Activated T-helper 1 cell treated with anti-CD3 and anti-CD28 coated beads, Interleukin-12 subunit alpha, Interleukin-12 subunit beta, Interleukin-2, Interleukin-4 antibody, amounts not matched to agents 30 ng/mL and 10 ng/mL and 1 ng/mL, durations not matched to agents 14 hours and 24 hours and 36 hours (primary cell): ENCODE measurements at regions of chr16 and their contacts with region 1.

Region 1: GRCh38 chr16:1378804-1379303 is 27.1 kb downstream of the GNPTG start:
- DNase-seq: peak; percentile 71
- H3K4me3 Mint-ChIP-seq: peak overlapping the region; percentile 83
- H3K27ac Mint-ChIP-seq: peak overlapping the region; percentile 94
- H3K4me1 Mint-ChIP-seq: peaks cover 15% of the 10 kb centered on the region
- H3K27me3 Mint-ChIP-seq: no peaks in the 10 kb centered on the region

Region 2: GRCh38 chr16:1308977-1309885 is 69.6 kb before region 1 on chr16 and contains the start of gene UBE2I:
- intact Hi-C with region 1: loop called (anchors 2 kb)
- DNase-seq: peak; percentile 98
- H3K4me3 Mint-ChIP-seq: peak within 1 kb of the TSS; percentile 95
- H3K27ac Mint-ChIP-seq: peak within 1 kb of the TSS; percentile 100
- H3K4me1 Mint-ChIP-seq: peaks cover 20% of the 10 kb centered on the region
- H3K27me3 Mint-ChIP-seq: peaks cover 2% of the 10 kb centered on the region
- total RNA-seq, gene UBE2I: 257 TPM in 2 replicates

Region 3: GRCh38 chr16:1342526-1343427 is 36.1 kb before region 1 on chr16:
- intact Hi-C with region 1: loop called (anchors 2 kb)
- DNase-seq: peak; percentile 89
- H3K4me3 Mint-ChIP-seq: peak overlapping the region; percentile 45
- H3K27ac Mint-ChIP-seq: peak overlapping the region; percentile 18
- H3K4me1 Mint-ChIP-seq: peaks cover 15% of the 10 kb centered on the region
- H3K27me3 Mint-ChIP-seq: peaks cover 2% of the 10 kb centered on the region

Region 4: DNA sequence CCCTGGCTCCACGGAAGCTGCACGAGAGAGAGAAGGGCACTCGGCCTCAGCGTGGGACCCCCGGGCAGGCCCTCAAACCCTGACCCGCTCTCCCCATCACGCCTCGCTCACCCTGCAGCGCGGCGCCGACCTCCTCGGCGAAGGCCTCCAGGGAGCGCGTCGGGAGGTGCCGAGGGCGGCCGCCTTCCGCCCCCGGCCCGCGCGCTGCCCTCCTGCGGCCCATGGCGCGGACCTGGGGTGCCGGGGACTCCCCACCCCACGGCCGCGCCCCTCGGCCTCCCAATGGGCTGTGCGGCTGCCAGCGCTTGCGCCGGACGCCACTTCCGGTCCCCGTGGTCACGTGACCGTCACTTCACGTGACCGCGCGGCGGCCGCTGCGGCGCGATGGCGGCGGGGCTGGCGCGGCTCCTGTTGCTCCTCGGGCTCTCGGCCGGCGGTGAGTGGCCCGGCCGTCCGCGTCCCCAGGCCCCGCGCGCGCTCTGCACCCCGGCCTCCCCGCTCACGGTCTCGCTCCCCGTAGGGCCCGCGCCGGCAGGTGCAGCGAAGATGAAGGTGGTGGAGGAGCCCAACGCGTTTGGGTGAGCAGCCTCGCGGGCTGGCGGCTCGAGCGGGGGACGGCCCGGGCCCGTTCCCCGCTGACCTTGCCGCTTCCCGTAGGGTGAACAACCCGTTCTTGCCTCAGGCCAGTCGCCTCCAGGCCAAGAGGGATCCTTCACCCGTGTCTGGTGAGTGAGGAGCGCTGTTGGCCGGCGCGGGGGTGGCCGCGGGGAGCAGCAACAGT is 27.1 kb before region 1 on chr16 and contains the starts of genes GNPTG and TSR3:
- intact Hi-C with region 1: loop called (anchors 1 kb)
- DNase-seq: peak; percentile 89
- H3K4me3 Mint-ChIP-seq: peak within 1 kb of the TSS; percentile 90
- H3K27ac Mint-ChIP-seq: peak within 1 kb of the TSS; percentile 83
- H3K4me1 Mint-ChIP-seq: peaks cover 18% of the 10 kb centered on the region
- H3K27me3 Mint-ChIP-seq: peaks cover 3% of the 10 kb centered on the region
- total RNA-seq, gene GNPTG: 21.4 and 22.5 TPM in 2 replicates
- total RNA-seq, gene TSR3: 87.4 and 89.4 TPM in 2 replicates

Region 5: GRCh38 chr16:1408171-1408837 is 29.4 kb after region 1 on chr16:
- intact Hi-C with region 1: loop called (anchors 2 kb)
- DNase-seq: peak; percentile 92
- H3K4me3 Mint-ChIP-seq: peak overlapping the region; percentile 75
- H3K27ac Mint-ChIP-seq: peak overlapping the region; percentile 18
- H3K4me1 Mint-ChIP-seq: peaks cover 5% of the 10 kb centered on the region
- H3K27me3 Mint-ChIP-seq: no peaks in the 10 kb centered on the region

Region 6: GRCh38 chr16:1492923-1493745 is 114.3 kb after region 1 on chr16 and contains the start of gene TELO2:
- intact Hi-C with region 1: loop called (anchors 2 kb)
- DNase-seq: peak; percentile 85
- H3K4me3 Mint-ChIP-seq: peak within 1 kb of the TSS; percentile 92
- H3K27ac Mint-ChIP-seq: peak within 1 kb of the TSS; percentile 98
- H3K4me1 Mint-ChIP-seq: peaks cover 8% of the 10 kb centered on the region
- H3K27me3 Mint-ChIP-seq: no peaks in the 10 kb centered on the region
- total RNA-seq, gene TELO2: 94.1 and 95.3 TPM in 2 replicates